ENCODE measurements at regions of chr6 and their contacts with region 1.

Region 1: DNA sequence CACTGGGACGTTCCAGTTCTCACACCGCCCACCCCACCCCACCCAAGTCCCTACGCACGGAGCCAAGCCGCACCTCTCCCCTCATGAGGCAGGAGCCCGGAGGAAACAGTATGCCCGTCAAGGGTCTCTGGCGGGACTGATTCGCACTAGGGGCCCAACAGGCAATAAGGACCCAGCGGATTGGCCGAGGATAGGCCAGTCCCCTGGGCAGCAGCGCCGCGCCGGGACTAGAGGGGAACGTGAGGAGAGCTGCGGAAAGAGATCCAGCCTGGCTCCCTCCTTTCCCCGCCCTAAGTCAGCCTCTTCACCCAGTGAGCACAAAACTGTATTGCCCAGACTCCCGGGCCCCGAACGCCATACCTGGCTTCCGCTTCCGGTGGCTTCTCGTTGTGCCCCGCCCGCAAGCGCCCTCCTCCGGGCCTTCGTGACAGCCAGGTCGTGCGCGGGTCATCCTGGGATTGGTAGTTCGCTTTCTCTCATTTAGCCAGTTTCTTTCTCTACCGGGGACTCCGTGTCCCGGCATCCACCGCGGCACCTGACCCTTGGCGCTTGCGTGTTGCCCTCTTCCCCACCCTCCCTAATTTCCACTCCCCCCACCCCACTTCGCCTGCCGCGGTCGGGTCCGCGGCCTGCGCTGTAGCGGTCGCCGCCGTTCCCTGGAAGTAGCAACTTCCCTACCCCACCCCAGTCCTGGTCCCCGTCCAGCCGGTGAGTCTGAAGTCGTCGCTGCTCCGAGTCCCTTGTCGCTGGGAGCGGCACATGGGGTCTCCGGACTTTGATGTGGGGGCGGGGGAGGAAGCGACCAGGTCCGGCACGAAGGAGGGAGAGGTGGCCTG is at the start of gene CSNK2B:
- DNase-seq: peak; percentile 97 to 99 (median 98)
- H3K4me3 ChIP-seq: peak within 1 kb of the TSS; percentile 94 to 96
- H3K4me3 Mint-ChIP-seq: peak within 1 kb of the TSS; percentile 89 to 100 (median 96)
- H3K27ac ChIP-seq: peak within 1 kb of the TSS; percentile 92
- H3K27ac Mint-ChIP-seq: peak within 1 kb of the TSS; percentile 94 to 100 (median 99)
- H3K4me1 ChIP-seq: peaks cover 59% of the 10 kb centered on the region
- H3K4me1 Mint-ChIP-seq: peaks cover 32 to 67% (median 49%) of the 10 kb centered on the region in 4 donors
- H3K27me3 ChIP-seq: no peaks in the 10 kb centered on the region
- H3K27me3 Mint-ChIP-seq: no peaks in the 10 kb centered on the region
- total RNA-seq, gene CSNK2B: 141 to 148 TPM

Region 2: DNA sequence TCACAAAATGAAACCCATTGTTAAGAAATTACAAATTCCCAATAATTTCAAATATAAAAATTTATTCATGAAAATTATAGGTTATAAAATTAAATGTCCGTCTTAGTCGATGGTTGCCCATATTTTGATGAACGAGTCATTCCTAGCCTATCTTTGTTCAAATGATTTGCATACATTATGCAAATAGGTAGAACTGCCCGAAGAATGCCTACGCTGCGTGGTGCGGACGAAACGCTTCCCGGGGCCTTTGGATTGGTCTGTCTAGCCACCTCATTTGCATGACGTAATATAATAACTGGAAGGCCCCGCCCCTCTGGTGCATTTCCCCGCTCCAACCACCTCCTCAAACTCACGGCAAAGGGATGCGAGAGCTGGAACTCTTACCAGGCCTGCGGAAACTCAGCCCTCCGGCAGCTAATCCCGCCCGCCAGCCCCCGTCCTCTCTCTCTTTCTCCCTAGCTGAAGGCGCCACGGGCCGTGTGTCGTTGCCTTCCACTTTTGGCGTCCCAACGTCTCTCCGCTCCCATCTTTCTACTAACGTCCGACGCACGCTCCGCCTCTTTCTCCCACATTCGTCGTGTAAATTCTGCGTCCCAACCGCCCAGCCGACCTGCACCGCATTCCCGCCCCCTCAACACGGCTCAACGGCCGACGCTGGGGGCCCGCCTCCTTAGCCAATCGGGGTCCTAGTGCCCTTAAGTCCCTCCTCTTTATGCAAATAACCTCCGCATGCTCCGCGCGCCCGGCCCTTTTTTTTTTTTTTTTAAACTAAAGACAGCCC is 45.7 kb before region 1 on chr6:
- CTCF ChIA-PET with region 1: interaction called, 4 read pairs
- POLR2A ChIA-PET with region 1: interaction called, 12 read pairs
- intact Hi-C with region 1: loop called (anchors 1 kb)
- DNase-seq: peak; percentile 96 to 98 (median 98)
- H3K4me3 ChIP-seq: peak overlapping the region in 1 of 2 donors; percentile 93
- H3K4me3 Mint-ChIP-seq: peak overlapping the region; percentile 89 to 98 (median 93)
- H3K27ac ChIP-seq: peak overlapping the region; percentile 99
- H3K27ac Mint-ChIP-seq: peak overlapping the region; percentile 91 to 99 (median 98)
- H3K4me1 ChIP-seq: peaks cover 34% of the 10 kb centered on the region
- H3K4me1 Mint-ChIP-seq: peaks cover 21 to 49% (median 39%) of the 10 kb centered on the region in 4 donors
- H3K27me3 ChIP-seq: no peaks in the 10 kb centered on the region
- H3K27me3 Mint-ChIP-seq: no peaks in the 10 kb centered on the region

Region 3: DNA sequence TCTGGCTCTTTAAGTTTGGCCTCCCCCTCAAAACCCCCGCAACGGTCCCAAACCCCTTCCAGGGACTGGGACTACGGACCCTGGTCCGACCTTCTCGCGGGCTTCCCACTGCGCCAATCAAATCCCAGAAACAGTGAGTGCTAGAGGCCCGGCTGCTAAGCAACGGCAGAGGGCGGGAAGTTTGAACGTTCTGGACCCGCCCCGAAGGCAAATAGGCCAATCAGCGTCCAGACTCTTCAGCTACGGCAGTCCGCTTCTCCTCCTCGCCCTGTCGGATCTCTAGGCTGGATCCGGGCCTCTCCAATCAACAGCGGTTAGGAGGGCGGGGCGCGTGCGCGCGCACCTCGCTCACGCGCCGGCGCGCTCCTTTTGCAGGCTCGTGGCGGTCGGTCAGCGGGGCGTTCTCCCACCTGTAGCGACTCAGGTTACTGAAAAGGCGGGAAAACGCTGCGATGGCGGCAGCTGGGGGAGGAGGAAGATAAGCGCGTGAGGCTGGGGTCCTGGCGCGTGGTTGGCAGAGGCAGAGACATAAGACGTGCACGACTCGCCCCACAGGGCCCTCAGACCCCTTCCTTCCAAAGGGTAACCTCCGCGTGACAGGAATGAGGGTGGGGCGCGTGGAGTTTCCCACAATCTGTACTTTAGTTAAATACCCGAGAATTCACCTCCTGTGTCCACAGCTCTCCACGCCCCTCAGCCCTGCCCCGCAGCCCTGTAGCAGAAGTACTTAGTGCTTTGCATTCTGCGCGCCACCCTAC is 74.1 kb after region 1 on chr6 and contains the start of gene MSH5:
- CTCF ChIA-PET with region 1: interaction called, 5 read pairs
- POLR2A ChIA-PET with region 1: interaction called, 3 read pairs
- intact Hi-C with region 1: loop called (anchors 1 kb)
- DNase-seq: peak; percentile 92 to 97 (median 94)
- H3K4me3 ChIP-seq: peak within 1 kb of the TSS; percentile 82
- H3K4me3 Mint-ChIP-seq: peak within 1 kb of the TSS; percentile 89 to 99 (median 98)
- H3K27ac ChIP-seq: peak within 1 kb of the TSS; percentile 64
- H3K27ac Mint-ChIP-seq: peak within 1 kb of the TSS; percentile 94 to 97 (median 95)
- H3K4me1 ChIP-seq: peaks cover 42% of the 10 kb centered on the region
- H3K4me1 Mint-ChIP-seq: peaks cover 33 to 64% (median 51%) of the 10 kb centered on the region in 4 donors
- H3K27me3 ChIP-seq: no peaks in the 10 kb centered on the region
- H3K27me3 Mint-ChIP-seq: no peaks in the 10 kb centered on the region
- total RNA-seq, gene MSH5: 11.4 to 12.1 TPM

Region 4: GRCh38 chr6:31834434-31835198 is 168.9 kb after region 1 on chr6:
- CTCF ChIA-PET with region 1: interaction called, 3 read pairs
- POLR2A ChIA-PET with region 1: interaction called, 11 read pairs
- intact Hi-C with region 1: loop called (anchors 1 kb)
- DNase-seq: peak; percentile 80 to 84 (median 81)
- H3K4me3 ChIP-seq: peak overlapping the region; percentile 75 to 88
- H3K4me3 Mint-ChIP-seq: peak overlapping the region; percentile 88 to 99 (median 96)
- H3K27ac ChIP-seq: peak overlapping the region; percentile 88
- H3K27ac Mint-ChIP-seq: peak overlapping the region; percentile 97 to 99 (median 99)
- H3K4me1 ChIP-seq: peaks cover 61% of the 10 kb centered on the region
- H3K4me1 Mint-ChIP-seq: peaks cover 27 to 65% (median 48%) of the 10 kb centered on the region in 4 donors
- H3K27me3 ChIP-seq: no peaks in the 10 kb centered on the region
- H3K27me3 Mint-ChIP-seq: no peaks in the 10 kb centered on the region

Region 5: GRCh38 chr6:31958741-31959739 is 293.3 kb after region 1 on chr6 and contains the starts of genes NELFE and SKIC2:
- CTCF ChIA-PET with region 1: no interaction called
- POLR2A ChIA-PET with region 1: interaction called, 3 read pairs
- intact Hi-C with region 1: loop called (anchors 2 kb)
- DNase-seq: peak; percentile 98 to 99 (median 99)
- H3K4me3 ChIP-seq: peak within 1 kb of the TSS; percentile 95
- H3K4me3 Mint-ChIP-seq: peak within 1 kb of the TSS; percentile 92 to 98 (median 96)
- H3K27ac ChIP-seq: peak within 1 kb of the TSS; percentile 98
- H3K27ac Mint-ChIP-seq: peak within 1 kb of the TSS; percentile 97 to 99 (median 98)
- H3K4me1 ChIP-seq: peaks cover 35% of the 10 kb centered on the region
- H3K4me1 Mint-ChIP-seq: peaks cover 21 to 43% (median 32%) of the 10 kb centered on the region in 4 donors
- H3K27me3 ChIP-seq: no peaks in the 10 kb centered on the region
- H3K27me3 Mint-ChIP-seq: no peaks in the 10 kb centered on the region
- total RNA-seq, gene NELFE: 45.8 to 49.0 TPM
- total RNA-seq, gene SKIC2: 117 to 119 TPM

Measured in CD4-positive, alpha-beta memory T cell (primary cell).